ENCODE measurements at regions of chr17 and their contacts with region 1.

Region 1: DNA sequence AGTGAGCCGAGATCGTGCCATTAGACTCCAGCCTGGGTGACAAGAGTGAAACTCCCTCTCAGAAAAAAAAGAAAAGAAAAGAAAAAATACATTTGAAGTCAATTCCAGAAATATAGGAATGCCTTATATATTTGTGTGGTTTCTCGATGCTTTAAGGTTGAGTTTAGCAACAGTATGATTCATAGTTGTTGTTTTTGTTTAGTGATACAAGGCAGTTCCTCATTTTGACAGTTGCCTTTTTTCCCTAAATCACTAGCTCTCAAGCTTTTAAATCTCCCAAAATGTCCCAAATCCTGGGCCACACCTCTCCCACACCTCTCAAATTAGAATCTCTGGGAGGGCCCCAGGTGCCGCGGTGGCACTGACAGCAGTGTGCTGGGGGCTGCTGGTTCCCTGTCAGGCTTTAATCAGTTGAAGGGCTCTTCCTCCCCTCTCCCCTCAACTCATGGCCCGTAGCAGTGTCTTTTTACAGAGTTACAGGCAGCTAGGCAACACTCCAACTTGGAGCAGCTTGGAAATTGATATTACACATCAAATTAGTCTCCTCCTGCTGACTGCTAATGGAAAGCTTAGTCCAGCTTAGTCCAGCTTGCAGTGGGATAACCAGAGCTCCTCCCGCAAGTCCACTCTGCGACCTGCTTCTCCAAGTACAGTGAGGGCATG is 58.4 kb downstream of the EPN2 start:
- DNase-seq: no peak
- ATAC-seq: no peak
- H3K4me3 Mint-ChIP-seq: no peak overlapping the region
- H3K27ac Mint-ChIP-seq: no peak overlapping the region
- H3K4me1 Mint-ChIP-seq: peaks cover 5% of the 10 kb centered on the region
- H3K27me3 Mint-ChIP-seq: no peaks in the 10 kb centered on the region

Region 2: GRCh38 chr17:19306160-19307111 is 10.8 kb after region 1 on chr17:
- CTCF ChIA-PET with region 1: interaction called, 12 read pairs
- DNase-seq: peak; percentile 47
- ATAC-seq: peak; percentile 74
- H3K4me3 Mint-ChIP-seq: no peak overlapping the region
- H3K27ac Mint-ChIP-seq: no peak overlapping the region
- H3K4me1 Mint-ChIP-seq: peaks cover 37% of the 10 kb centered on the region
- H3K27me3 Mint-ChIP-seq: peaks cover 5% of the 10 kb centered on the region

Region 3: DNA sequence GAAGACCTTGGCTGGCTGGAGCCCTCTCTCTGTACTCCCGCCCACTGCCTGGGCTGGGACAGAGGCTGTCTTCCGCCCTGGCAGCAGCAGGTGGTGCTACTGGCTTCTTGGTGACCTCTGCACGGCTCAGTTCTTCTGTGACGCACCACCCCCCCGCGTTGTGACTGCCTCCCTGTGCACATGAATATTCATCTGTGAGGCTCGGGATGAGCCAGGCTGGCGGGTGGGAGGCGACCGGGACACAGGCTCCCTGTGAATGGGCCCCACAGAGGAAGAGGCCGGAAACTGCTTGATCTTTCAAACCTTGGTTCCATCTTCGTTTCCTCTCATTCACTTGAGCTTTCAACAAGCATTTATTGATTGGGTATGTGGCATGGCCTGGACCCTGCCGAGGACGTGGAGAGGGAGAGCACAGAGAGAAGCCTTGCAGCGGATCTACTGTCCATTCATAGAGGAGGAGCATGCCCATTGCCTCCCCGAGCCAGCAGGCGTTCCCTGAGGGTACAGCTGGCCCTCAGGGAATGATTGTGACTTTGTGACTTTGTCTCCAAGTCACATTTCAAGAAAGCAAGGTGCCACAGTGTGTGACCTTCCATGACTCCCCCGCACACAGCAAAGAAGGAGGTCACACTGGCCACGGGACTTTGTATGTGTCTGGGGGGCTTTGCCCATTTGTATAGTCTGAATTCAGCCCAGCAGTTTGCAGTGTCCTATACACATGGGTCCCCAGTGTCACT is 21.9 kb after region 1 on chr17:
- CTCF ChIA-PET with region 1: no interaction called
- DNase-seq: no peak
- ATAC-seq: no peak
- H3K4me3 Mint-ChIP-seq: no peak overlapping the region
- H3K27ac Mint-ChIP-seq: no peak overlapping the region
- H3K4me1 Mint-ChIP-seq: peaks cover 7% of the 10 kb centered on the region
- H3K27me3 Mint-ChIP-seq: no peaks in the 10 kb centered on the region